ENCODE measurements at regions of chrX and their contacts with region 1.

Region 1: DNA sequence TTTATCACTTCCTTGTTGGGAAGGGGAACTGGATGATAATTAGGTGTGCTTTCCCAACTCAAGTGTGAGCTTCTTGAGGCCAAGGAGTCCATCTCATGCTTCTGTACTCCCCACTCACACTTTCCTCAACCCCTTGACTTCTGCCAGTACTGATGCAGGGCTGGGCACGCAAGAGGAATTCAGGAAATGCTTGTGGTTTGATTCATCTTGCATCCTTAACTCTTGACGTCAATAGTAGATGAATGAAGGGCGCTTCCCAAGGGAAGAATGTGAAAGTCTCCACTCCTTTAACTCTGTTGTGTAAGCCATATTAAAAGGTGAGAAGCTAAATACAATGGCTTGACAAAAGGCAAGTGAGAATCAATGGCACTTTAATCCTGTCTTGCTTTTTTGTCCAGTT is 101.8 kb downstream of the AGTR2 start:
- DNase-seq: peak; percentile 98
- H3K4me3 ChIP-seq: no peak overlapping the region
- H3K27ac ChIP-seq: peak overlapping the region; percentile 99
- H3K4me1 ChIP-seq: peaks cover 10% of the 10 kb centered on the region
- H3K27me3 ChIP-seq: no peaks in the 10 kb centered on the region
- CTCF ChIP-seq: no peak

Region 2: DNA sequence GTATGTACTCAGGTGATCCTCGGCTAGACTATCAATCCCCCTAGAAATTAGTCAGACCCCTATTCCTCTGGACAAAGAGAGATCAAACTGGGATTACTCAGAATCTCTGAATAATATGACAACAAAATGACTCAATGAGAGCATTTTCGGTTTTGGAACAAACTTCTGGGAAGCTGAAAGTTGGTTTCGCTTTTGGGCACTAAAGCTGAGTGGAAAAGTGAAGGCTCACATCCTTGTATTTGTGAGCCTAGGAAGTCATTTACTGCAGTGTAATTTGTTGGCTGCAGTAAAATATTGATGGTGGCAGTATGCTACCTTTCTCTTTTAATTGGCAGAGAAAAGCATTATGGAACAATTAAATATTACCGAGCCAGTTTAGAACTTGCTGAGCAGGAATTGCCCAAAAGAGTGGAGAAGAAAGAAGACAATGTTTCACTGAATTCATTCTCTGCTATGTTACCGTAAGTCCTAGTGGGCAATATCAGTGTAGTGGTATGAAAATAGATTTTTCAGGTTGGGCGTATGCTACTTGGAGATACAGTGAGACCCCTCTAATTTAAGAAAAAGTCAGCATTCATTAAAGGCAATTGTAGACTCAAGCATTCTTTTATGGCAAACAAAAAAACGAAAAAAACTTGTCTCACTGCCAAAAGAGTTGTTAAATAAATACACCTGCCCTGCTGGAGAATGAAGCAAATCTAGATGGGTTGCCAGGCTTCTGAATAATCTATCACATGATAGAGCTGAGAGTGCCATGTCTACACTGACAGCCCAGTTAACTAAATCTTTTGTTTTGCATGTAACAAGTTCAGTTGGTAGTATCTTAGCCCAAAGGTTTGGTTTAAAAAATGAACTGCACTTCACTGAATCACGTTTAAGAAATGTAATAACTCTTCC is 32.1 kb before region 1 on chrX:
- CTCF ChIA-PET with region 1: no interaction called
- dilution Hi-C with region 1: no loop called
- in situ Hi-C with region 1: no loop called
- intact Hi-C with region 1: loop called (anchors 2 kb)
- DNase-seq: peak; percentile 84
- H3K4me3 ChIP-seq: peak overlapping the region in 2 of 3 experiments; percentile 18 to 33
- H3K27ac ChIP-seq: peak overlapping the region; percentile 53
- H3K4me1 ChIP-seq: peaks cover 31% of the 10 kb centered on the region
- H3K27me3 ChIP-seq: no peaks in the 10 kb centered on the region
- CTCF ChIP-seq: no peak

Region 3: DNA sequence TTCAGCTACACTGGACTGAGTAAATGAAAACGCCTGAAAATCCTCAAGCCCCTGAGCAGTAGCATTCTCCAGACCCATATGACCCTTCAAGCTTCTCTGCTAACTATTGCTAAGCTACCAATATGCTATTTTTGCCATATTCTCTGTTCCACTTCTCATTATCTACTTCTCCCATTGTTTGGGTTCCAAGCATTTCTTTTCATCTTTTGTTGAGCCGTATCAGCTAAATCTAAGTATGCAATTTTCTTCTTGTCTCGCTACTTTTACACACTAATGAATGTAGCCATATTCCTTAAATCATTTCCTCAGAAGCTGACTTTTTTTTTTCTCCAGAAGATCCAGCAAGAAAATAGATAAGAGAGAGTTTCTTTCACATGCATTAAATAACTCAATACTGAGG is 26.6 kb after region 1 on chrX:
- CTCF ChIA-PET with region 1: no interaction called
- dilution Hi-C with region 1: no loop called
- in situ Hi-C with region 1: no loop called
- intact Hi-C with region 1: no loop called
- DNase-seq: no peak
- H3K4me3 ChIP-seq: no peak overlapping the region
- H3K27ac ChIP-seq: no peak overlapping the region
- H3K4me1 ChIP-seq: no peaks in the 10 kb centered on the region
- H3K27me3 ChIP-seq: no peaks in the 10 kb centered on the region
- CTCF ChIP-seq: no peak